ENCODE measurements at regions of chr12 and their contacts with region 1.

Region 1: DNA sequence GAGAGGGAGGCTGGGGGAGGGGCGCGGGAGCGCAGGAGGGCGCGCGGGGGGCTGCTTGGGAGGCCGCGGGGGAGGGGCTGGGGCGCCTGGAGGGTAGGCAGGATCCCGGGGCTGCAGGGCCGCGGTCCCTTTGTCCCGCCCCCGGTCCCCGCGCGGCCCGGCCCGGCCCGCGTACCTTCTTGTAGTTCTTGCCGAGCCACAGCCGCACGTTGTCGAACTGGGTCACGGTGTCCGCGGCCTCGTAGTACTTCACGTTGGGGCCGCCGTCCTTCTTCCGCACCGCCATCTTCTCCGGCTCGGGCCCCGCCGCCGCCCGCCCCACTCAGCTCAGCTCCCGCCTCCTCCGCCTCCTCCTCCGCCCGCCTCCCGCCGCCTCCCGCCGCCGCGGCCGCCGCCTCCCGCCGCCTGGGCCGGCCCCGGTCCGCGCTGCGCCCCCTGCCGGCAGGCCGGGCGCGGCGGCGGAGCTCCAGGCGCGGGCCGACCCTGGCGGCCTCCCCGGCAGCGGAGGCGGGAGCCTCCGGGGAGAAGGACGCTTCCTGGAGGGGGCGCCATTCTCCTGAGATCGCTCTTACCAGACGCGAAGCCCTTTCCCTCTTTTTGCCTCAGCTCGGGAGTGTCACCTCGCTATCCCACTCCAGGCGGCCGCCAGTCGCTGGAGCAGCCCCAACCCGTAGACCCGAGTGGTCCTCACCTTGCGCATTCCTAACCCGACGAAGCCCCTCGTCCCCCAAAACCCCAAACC is at the start of gene SMARCC2:
- DNase-seq: peak; percentile 75
- ATAC-seq: peak; percentile 85
- H3K4me3 ChIP-seq: peak within 1 kb of the TSS; percentile 86 to 88
- H3K27ac ChIP-seq: peak within 1 kb of the TSS; percentile 84
- H3K4me1 ChIP-seq: peaks cover 17 to 27% of the 10 kb centered on the region in 2 experiments
- H3K27me3 ChIP-seq: no peaks in the 10 kb centered on the region
- CTCF ChIP-seq: peak; percentile 65 to 70 (median 65)
- POLR2A ChIP-seq: no peak
- RAD21 ChIP-seq: peak; percentile 54; the same call in 1 of the 2 replicates
- total RNA-seq, gene SMARCC2: 99.7 TPM

Region 2: DNA sequence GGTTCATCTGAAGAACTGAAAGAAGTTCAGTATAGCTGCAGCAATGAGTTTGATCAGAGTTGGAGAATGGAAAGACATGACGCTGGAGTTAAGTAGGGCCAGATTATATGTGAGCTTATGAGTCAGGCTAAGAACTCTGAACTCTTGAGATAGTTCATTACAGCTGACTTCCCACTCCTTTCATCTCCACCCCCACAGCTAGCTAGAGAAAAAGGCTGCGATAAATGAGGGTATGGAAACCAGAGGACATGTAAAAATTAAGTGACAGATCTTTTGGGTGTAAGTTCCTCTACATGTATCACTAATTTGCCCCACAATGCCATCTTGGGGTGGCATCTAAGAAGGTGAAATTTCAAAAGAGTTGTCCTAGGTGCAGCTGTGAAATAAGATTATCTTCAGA is 290.3 kb before region 1 on chr12:
- CTCF ChIA-PET with region 1: no interaction called
- POLR2A ChIA-PET with region 1: no interaction called
- RAD21 ChIA-PET with region 1: no interaction called
- intact Hi-C with region 1: no loop called
- DNase-seq: no peak
- ATAC-seq: no peak
- H3K4me3 ChIP-seq: no peak overlapping the region
- H3K27ac ChIP-seq: no peak overlapping the region
- H3K4me1 ChIP-seq: peaks cover 0 to 5% of the 10 kb centered on the region in 2 experiments; a peak in 3 of 4 replicates
- H3K27me3 ChIP-seq: no peaks in the 10 kb centered on the region
- CTCF ChIP-seq: no peak
- POLR2A ChIP-seq: no peak
- RAD21 ChIP-seq: peak; percentile 13; the same call in 1 of the 2 replicates

Region 3: DNA sequence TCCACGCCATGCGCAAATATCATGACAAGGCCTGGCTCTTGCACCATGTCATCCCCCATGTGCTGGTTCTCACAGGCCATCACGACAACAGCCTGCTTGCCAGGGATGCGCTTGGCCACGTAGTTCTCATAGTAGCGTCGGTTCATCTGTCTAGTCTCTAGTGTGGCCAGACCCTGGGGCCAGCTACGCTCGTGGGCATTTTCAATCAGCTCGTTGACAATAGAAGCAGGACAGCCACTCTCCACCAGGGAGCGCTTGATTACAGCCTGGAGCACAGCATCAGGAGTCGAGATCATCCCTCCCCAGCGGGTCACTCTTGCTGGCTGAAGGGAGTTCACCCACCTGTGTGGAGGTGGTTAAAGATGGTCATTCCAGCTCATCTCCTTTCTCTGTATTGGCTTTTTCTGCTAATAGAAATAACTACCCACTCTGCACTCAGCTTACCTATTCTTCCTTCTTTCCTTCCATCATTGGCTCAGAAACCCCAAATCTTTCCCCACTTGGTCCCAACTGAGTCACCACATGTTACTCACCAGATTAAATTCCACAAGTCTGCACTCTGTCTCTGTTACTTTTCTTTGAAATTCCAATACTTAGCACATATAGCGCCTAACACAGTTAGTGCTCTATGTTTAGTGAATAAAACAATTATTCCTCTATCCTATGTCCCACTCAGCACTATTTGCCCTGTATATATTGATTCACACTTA is 17.3 kb after region 1 on chr12:
- CTCF ChIA-PET with region 1: interaction called, 13 read pairs
- POLR2A ChIA-PET with region 1: interaction called, 4 read pairs
- RAD21 ChIA-PET with region 1: interaction called in 1 of 2 experiments, 4 read pairs
- intact Hi-C with region 1: no loop called
- DNase-seq: no peak
- ATAC-seq: peak; percentile 92
- H3K4me3 ChIP-seq: no peak overlapping the region
- H3K27ac ChIP-seq: no peak overlapping the region
- H3K4me1 ChIP-seq: no peaks in the 10 kb centered on the region
- H3K27me3 ChIP-seq: no peaks in the 10 kb centered on the region
- CTCF ChIP-seq: peak; percentile 69 to 82 (median 74); a peak in 5 of 6 replicates
- POLR2A ChIP-seq: no peak
- RAD21 ChIP-seq: peak; percentile 74

Region 4: DNA sequence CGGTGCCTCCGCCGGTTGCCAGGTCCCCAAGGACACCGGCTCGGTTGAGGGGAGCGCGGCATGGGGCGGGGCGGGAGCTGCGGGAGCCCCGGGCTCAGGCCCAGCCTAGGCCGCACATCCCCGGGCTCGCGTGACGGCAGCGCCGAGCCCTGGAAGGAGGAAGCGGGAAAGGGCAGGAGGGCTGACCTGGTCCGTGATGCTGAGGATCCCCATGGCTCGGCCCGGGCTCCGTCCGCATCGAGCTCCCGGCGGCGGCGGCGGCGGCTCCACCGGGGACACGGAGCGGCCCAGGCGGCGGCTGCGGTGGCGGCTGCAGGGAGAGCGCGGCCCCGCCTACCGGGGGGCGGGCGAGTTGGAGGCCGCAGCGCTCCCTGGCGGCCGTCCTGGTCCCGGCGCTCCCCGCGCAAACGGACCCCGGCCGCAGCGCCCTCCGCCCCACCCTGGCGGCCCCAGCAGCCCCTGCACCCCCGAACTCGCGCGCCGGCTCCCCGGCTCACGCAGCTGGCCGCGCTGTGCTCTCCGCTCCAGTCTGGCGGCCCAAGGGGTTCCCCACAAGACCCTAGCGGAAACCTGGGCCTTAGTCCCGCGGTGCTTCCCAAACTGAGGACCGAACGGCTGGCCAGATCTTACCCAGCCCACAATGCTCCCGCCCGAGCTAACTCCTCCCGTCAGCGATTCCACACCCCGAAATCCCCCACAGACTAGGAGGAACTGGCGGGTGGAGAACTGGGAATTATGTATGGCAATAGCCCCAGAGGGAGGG is 68.9 kb after region 1 on chr12 and contains the start of gene ANKRD52:
- CTCF ChIA-PET with region 1: interaction called, 8 read pairs
- POLR2A ChIA-PET with region 1: no interaction called
- RAD21 ChIA-PET with region 1: no interaction called
- intact Hi-C with region 1: loop called (anchors 1 kb)
- DNase-seq: no peak
- ATAC-seq: peak; percentile 79
- H3K4me3 ChIP-seq: peak within 1 kb of the TSS; percentile 71 to 89
- H3K27ac ChIP-seq: peak within 1 kb of the TSS; percentile 82
- H3K4me1 ChIP-seq: peaks cover 26 to 52% of the 10 kb centered on the region in 2 experiments
- H3K27me3 ChIP-seq: no peaks in the 10 kb centered on the region
- CTCF ChIP-seq: peak; percentile 5 to 52 (median 44); a peak in 3 of 6 replicates
- POLR2A ChIP-seq: no peak
- RAD21 ChIP-seq: no peak
- total RNA-seq, gene ANKRD52: 56.6 TPM

Region 5: DNA sequence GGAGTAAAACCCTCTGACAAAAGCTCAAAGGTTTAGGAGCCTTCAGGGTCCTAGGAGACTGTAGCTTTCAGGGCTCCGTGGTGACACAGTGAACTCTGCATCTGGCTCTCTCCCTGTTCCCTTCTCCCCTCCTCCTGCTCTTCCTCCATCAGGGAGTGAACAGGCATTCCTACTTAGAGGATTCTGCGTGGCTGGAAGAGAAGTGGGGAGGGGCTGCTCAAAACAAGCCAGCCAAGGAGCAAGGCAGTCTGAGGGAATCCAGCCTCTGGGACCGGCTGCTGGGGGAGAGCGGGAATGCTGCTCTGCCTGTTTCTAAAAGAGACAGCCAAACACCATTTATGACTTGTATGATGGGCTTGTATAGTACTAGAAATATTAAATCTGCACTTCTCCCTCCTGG is 381.8 kb after region 1 on chr12:
- CTCF ChIA-PET with region 1: no interaction called
- POLR2A ChIA-PET with region 1: no interaction called
- RAD21 ChIA-PET with region 1: no interaction called
- intact Hi-C with region 1: loop called (anchors 5 kb)
- DNase-seq: no peak
- ATAC-seq: no peak
- H3K4me3 ChIP-seq: no peak overlapping the region
- H3K27ac ChIP-seq: no peak overlapping the region
- H3K4me1 ChIP-seq: peaks cover 0 to 3% of the 10 kb centered on the region in 2 experiments; a peak in 1 of 4 replicates
- H3K27me3 ChIP-seq: no peaks in the 10 kb centered on the region
- CTCF ChIP-seq: no peak
- POLR2A ChIP-seq: no peak
- RAD21 ChIP-seq: no peak

Measured in HCT116 (cell line).